ENCODE measurements at regions of chr4 and their contacts with region 1.

Region 1: GRCh38 chr4:79831701-79832514 is 241.1 kb downstream of the ANTXR2 start:
- DNase-seq: no peak
- H3K4me3 Mint-ChIP-seq: no peak overlapping the region
- H3K27ac Mint-ChIP-seq: no peak overlapping the region
- H3K4me1 Mint-ChIP-seq: peaks cover 9% of the 10 kb centered on the region
- H3K27me3 Mint-ChIP-seq: peaks cover 8% of the 10 kb centered on the region

Region 2: DNA sequence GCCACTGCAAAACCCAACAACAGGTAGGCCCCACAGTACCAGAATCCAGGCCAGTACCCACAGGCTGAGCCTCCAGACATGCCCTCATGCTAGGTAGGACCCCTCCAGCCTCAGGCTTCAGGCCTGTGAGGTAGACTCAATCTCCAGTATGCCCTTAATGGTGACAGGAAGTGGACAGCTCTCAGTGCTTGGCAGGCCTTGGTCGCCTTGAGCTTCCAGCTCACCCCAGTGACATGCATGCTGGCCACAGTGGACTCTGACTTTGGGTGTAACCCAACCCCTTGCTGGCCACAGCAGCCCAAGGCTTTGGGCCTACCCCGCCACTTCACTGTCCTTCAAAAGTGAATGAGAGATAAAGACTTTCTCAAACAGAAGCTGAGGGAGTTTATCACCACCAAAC is 83.1 kb before region 1 on chr4:
- CTCF ChIA-PET with region 1: no interaction called
- POLR2A ChIA-PET with region 1: no interaction called
- intact Hi-C with region 1: no loop called
- DNase-seq: no peak
- H3K4me3 Mint-ChIP-seq: no peak overlapping the region
- H3K27ac Mint-ChIP-seq: no peak overlapping the region
- H3K4me1 Mint-ChIP-seq: no peaks in the 10 kb centered on the region
- H3K27me3 Mint-ChIP-seq: peaks cover 3% of the 10 kb centered on the region

Region 3: DNA sequence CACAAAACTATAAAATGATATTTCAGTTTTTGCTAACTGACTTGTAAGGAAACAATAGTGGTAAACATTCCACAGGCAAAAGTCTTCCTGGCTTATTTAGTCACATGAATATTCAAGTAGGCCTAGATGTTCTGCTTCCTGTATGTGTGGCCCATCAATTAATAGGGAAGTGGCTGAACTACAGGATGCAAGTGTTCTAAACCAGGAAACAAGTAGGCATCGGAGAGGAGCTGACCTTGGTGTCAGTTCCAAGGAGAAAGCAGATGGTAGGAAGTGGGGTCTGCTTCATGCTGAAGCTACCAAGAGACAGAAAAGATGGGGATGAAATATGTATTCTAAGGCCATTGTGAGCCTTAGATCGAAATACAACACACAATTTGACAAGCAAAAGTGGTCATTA is 91.4 kb after region 1 on chr4:
- CTCF ChIA-PET with region 1: no interaction called
- POLR2A ChIA-PET with region 1: no interaction called
- intact Hi-C with region 1: loop called (anchors 5 kb)
- DNase-seq: no peak
- H3K4me3 Mint-ChIP-seq: no peak overlapping the region
- H3K27ac Mint-ChIP-seq: no peak overlapping the region
- H3K4me1 Mint-ChIP-seq: peaks cover 11% of the 10 kb centered on the region
- H3K27me3 Mint-ChIP-seq: no peaks in the 10 kb centered on the region

Measured in activated CD4-positive, alpha-beta memory T cell treated with anti-CD3 and anti-CD28 coated beads for 36 hours (primary cell).